GM13976 (cell line): ENCODE measurements at regions of chr7 and their contacts with region 1.

Region 1: DNA sequence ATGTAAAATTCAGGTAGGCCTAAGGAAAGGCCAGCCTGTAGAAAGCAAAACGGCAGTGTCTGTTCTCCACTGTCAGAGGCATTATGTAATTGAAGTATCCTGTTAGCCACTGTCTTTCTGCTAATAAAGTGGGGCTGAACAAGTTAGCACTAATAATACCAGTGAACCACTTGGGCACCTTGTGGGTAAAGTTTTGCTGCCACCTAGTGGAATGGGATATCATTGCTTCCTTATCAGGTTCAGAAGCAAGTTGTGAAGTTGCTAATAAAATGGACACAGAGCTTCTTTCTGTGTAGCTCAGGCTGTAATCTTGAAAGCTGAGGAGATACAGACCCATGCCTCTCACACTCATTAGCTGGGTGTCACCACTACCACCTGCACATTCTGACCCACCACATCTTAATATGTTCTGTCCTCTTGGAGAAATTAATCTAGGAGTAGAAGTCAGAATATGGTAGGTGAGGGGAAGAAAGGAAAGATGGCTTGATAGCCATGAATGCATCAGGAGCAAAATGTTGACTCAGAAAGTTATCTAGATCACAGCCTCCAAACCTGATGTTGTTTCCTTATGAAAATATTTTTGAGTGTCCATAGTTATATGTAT is 175.1 kb downstream of the SEPTIN7 start:
- DNase-seq: peak; percentile 59
- CTCF ChIP-seq: peak; percentile 73

Region 2: DNA sequence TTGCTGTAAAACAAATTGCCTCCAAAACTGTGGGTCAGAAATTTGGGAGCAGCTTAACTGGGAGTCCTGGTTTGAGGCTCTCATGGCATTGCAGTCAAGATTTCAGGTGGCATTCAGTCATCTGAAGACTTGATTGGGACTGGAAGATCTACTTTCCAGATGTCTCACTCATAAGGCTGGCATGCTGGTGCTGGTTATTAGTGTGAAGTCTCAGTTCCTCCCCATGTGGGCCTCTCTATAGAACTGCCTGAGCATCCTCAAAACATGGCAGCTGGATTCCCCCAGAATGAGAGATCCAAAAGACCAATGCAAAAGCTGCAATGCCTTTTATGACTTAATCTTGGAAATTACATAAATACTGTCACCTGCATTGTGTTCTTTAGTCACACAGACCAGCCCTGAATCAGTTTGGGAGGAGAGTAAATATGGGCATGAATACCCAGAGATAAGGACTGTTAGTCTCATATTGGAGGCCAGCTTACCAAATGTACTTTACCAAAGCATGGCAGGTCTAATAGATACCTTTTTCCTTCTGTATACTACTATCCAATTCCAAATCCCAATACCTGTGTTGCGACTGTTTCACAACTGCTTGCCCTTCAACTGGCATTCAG is 274.6 kb before region 1 on chr7:
- in situ Hi-C with region 1: loop called (anchors 10 kb)
- DNase-seq: no peak
- CTCF ChIP-seq: no peak

Region 3: GRCh38 chr7:35906191-35906908 is 69.6 kb before region 1 on chr7:
- in situ Hi-C with region 1: loop called (anchors 10 kb)
- DNase-seq: peak; percentile 43
- CTCF ChIP-seq: peak; percentile 82